ENCODE measurements at regions of chr3 and their contacts with region 1.

Region 1: GRCh38 chr3:123286308-123287023 is 84.7 kb downstream of the SEC22A start:
- DNase-seq: peak; percentile 70 to 81
- ATAC-seq: peak; percentile 88 to 97
- H3K4me3 ChIP-seq: no peak overlapping the region
- H3K27ac ChIP-seq: no peak overlapping the region
- H3K4me1 ChIP-seq: no peaks in the 10 kb centered on the region
- CTCF ChIP-seq: peak; percentile 60
- EP300 ChIP-seq: no peak
- POLR2A ChIP-seq: no peak
- RAD21 ChIP-seq: peak; percentile 33 to 53; a peak in 4 of 5 replicates

Region 2: GRCh38 chr3:123297627-123297899 is 11.1 kb after region 1 on chr3:
- CTCF ChIA-PET with region 1: interaction called, 36 read pairs
- POLR2A ChIA-PET with region 1: no interaction called
- DNase-seq: no peak
- ATAC-seq: no peak
- H3K4me3 ChIP-seq: no peak overlapping the region
- H3K27ac ChIP-seq: 0 out of 6 replicates have a peak overlapping the region, but pooled peaks of 1 of the 2 experiments have one; percentile 2
- H3K4me1 ChIP-seq: peaks cover 22% of the 10 kb centered on the region
- CTCF ChIP-seq: no peak
- EP300 ChIP-seq: no peak
- POLR2A ChIP-seq: no peak
- RAD21 ChIP-seq: peak in 1 of 2 experiments; percentile 37; a peak in 2 of 5 replicates

Region 3: DNA sequence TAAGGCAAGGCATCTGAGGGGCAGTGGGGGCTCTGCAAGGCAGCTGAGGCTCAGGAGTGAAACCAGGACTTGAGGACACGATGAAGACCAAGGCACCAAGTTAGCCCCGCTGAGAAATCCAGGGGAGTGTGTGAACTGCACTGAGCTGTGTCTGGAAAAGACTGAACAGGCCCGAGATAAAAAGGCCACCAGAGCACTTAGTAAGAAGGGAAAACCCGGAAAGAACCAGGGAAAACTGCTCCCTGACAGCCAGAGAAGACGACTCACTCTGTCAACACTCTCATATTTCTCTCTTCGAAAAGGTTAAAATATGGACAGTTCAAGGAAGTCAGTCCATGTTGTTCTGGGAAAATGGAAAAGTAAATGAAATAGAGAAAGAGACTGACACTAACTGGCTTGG is 24.3 kb after region 1 on chr3:
- CTCF ChIA-PET with region 1: interaction called, 12 read pairs
- POLR2A ChIA-PET with region 1: no interaction called
- DNase-seq: peak in 1 of 2 experiments; percentile 35
- ATAC-seq: peak in 1 of 2 experiments; percentile 64; a peak in 3 of 6 replicates
- H3K4me3 ChIP-seq: no peak overlapping the region
- H3K27ac ChIP-seq: peak overlapping the region in 1 of 2 experiments; percentile 43; a peak in 2 of 6 replicates
- H3K4me1 ChIP-seq: 0 out of 3 replicates have a peak, but pooled peaks cover 10% of the 10 kb centered on the region
- CTCF ChIP-seq: no peak
- EP300 ChIP-seq: no peak
- POLR2A ChIP-seq: no peak
- RAD21 ChIP-seq: no peak

Measured in A549 (cell line).